CD4-positive, alpha-beta T cell (primary cell): ENCODE measurements at regions of chr19 and their contacts with region 1.

Region 1: DNA sequence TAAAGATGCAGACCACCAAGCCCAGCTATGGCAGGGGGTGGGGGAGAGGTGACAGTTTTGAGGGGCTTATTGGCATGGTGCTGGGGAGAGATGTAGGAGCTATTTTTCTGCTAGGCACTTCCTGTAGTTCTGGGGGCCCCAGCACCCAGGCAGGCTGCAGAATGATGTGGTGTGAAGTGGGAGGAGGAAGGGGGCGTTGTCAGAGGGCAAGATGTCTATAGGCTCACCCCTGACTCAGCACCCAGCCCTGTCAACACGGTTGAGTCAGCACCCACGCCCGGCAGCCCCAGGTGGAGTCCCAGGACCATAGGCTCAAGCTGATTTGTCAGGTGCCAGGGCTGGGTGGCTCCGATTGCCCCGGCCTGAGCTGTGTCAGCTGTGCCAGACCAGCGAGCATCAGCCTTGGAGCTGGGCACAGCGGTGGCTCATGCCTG is 5.8 kb downstream of the KLF2 start:
- DNase-seq: peak; percentile 87 to 98 (median 94)
- ATAC-seq: peak; percentile 66
- H3K4me3 ChIP-seq: peak overlapping the region; percentile 98
- H3K4me3 Mint-ChIP-seq: peak overlapping the region; percentile 92
- H3K27ac ChIP-seq: peak overlapping the region; percentile 77 to 94
- H3K27ac Mint-ChIP-seq: peak overlapping the region; percentile 97
- H3K4me1 ChIP-seq: peaks cover 49% of the 10 kb centered on the region
- H3K4me1 Mint-ChIP-seq: peaks cover 59% of the 10 kb centered on the region
- H3K27me3 ChIP-seq: no peaks in the 10 kb centered on the region
- H3K27me3 Mint-ChIP-seq: peaks cover 24% of the 10 kb centered on the region
- CTCF ChIP-seq: no peak

Region 2: DNA sequence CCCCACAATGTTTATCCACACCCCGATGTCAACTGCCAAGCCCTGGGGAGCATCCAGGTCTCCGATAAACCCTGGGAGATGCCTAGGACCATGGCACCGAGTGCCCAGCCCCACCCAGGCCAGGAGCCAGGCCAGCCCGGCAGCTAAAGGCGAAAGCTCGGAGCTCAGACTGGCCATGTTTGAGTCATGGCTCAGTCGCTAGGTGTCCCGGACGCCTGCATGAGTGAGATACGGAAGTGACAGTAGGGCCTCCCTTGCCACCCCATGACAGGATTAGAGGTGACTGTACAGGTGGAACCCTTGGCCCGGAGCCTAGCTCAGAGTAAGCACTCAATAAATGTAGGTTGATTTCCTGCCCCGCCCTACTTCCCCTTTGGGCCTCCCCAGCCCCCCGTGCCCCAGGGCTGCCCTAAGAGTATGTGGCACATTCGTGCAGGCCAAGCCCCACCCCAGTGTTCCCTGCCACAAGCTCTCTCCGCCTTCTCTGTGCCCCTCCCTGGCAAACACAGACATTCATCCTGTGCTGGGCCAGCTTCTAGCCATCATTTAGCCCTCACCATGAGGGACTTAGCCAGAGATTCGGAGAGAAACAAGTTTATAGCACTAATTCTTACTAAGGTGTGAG is 259.9 kb before region 1 on chr19:
- CTCF ChIA-PET with region 1: interaction called, 4 read pairs
- POLR2A ChIA-PET with region 1: interaction called, 10 read pairs
- intact Hi-C with region 1: no loop called
- DNase-seq: peak; percentile 69 to 98 (median 86)
- ATAC-seq: peak; percentile 88
- H3K4me3 ChIP-seq: peak overlapping the region; percentile 31
- H3K4me3 Mint-ChIP-seq: peak overlapping the region; percentile 76
- H3K27ac ChIP-seq: peak overlapping the region; percentile 84 to 92
- H3K27ac Mint-ChIP-seq: no peak overlapping the region
- H3K4me1 ChIP-seq: peaks cover 77% of the 10 kb centered on the region
- H3K4me1 Mint-ChIP-seq: peaks cover 40% of the 10 kb centered on the region
- H3K27me3 ChIP-seq: no peaks in the 10 kb centered on the region
- H3K27me3 Mint-ChIP-seq: no peaks in the 10 kb centered on the region
- CTCF ChIP-seq: peak; percentile 37

Region 3: DNA sequence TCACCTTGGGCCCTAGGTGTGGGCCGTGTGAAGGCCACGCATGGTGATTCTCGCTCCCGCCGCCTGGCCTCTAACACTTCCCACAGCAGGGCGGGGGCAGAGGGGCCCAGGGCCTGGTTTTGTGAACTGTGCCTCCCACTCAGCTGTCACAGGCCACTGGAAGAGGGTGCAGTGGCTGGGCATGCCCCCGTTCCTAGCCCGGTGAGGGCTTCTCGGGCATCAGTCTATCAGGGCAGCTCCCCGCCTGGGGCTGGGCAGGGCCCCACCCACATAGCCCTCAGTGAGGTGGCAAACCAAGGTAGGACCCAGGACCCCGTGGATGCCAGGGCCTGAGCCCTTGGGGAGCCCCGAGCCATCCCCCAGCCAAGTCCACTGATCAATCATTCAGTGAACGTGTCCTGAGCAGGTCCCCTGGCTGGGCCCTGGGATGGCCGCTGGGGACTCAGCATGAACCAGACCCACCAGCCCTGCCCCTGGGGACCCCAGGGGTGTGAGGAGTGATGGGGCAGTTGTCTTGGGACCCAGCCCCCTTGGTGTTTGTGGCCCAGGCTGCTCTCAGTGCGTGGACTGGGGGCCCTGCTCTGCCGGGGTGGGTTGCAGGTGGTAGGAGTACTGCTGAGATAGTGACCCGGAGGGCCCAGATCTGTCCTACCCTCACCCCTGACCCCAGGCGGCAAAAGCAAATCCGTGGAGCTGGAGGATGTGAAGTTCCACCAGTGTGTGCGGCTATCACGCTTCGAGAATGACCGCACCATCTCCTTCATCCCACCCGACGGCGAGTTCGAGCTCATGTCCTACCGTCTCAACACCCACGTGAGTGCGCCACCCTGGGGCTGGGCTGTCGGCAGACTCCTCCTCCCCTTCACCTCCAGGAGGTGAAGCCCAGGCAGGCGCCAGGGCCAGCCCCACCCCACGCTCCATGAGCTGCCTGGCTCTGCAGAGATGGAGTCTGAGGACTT is 103.2 kb before region 1 on chr19:
- CTCF ChIA-PET with region 1: no interaction called
- POLR2A ChIA-PET with region 1: no interaction called
- intact Hi-C with region 1: no loop called
- DNase-seq: peak in 2 of 14 experiments; percentile 21 to 25
- ATAC-seq: no peak
- H3K4me3 ChIP-seq: no peak overlapping the region
- H3K4me3 Mint-ChIP-seq: no peak overlapping the region
- H3K27ac ChIP-seq: peak overlapping the region in 1 of 2 donors; percentile 18
- H3K27ac Mint-ChIP-seq: no peak overlapping the region
- H3K4me1 ChIP-seq: peaks cover 3% of the 10 kb centered on the region
- H3K4me1 Mint-ChIP-seq: no peaks in the 10 kb centered on the region
- H3K27me3 ChIP-seq: no peaks in the 10 kb centered on the region
- H3K27me3 Mint-ChIP-seq: no peaks in the 10 kb centered on the region
- CTCF ChIP-seq: no peak

Region 4: GRCh38 chr19:16266586-16266942 is 63.8 kb before region 1 on chr19:
- CTCF ChIA-PET with region 1: interaction called, 3 read pairs
- POLR2A ChIA-PET with region 1: interaction called, 10 read pairs
- intact Hi-C with region 1: no loop called
- DNase-seq: peak; percentile 40 to 85 (median 60)
- ATAC-seq: peak; percentile 60
- H3K4me3 ChIP-seq: peak overlapping the region; percentile 20
- H3K4me3 Mint-ChIP-seq: peak overlapping the region; percentile 59
- H3K27ac ChIP-seq: peak overlapping the region in 1 of 2 donors; percentile 22
- H3K27ac Mint-ChIP-seq: peak overlapping the region; percentile 87
- H3K4me1 ChIP-seq: peaks cover 70% of the 10 kb centered on the region
- H3K4me1 Mint-ChIP-seq: peaks cover 48% of the 10 kb centered on the region
- H3K27me3 ChIP-seq: no peaks in the 10 kb centered on the region
- H3K27me3 Mint-ChIP-seq: no peaks in the 10 kb centered on the region
- CTCF ChIP-seq: no peak

Region 5: DNA sequence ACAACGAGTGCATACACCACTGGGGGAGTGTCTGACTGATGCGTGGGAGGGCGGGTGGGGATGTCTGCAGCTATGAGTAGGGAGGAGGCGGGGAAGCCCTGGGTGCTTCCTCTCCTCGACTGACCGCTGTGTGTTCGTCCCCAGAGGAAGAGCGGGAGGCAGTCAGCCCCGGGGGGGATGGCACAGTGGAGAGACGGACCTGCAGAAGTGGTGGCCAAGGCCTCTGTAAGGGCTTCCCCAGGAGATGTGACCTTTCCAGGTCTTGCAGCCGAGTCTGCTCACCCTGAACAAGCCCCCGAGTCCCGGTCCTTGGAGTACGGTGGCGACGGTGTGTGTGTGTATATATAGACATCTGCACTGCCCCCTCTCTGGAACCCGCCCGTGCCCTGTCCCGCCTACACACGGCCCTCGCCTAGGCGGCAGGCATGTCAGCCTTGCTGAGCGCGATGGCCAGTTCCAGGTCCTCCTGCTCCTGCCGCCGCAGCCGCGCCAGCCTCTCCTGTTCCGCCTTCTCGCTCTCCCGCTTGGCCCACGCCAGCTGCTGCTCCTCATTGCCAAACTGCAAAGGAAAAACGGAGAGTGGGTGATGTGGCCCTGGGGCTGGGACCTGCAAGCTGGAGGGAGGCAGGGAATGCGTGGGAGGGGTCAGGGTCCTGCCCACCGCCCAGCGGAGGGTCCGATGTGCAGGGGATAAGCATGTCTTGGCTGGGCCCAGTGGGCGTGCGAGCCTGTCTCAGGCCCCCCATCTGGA is 25.1 kb after region 1 on chr19:
- CTCF ChIA-PET with region 1: interaction called, 7 read pairs
- POLR2A ChIA-PET with region 1: interaction called, 3,819 read pairs
- intact Hi-C with region 1: no loop called
- DNase-seq: peak in 4 of 14 experiments; percentile 19 to 60 (median 54)
- ATAC-seq: peak; percentile 74
- H3K4me3 ChIP-seq: no peak overlapping the region
- H3K4me3 Mint-ChIP-seq: peak overlapping the region; percentile 63
- H3K27ac ChIP-seq: no peak overlapping the region
- H3K27ac Mint-ChIP-seq: peak overlapping the region; percentile 68
- H3K4me1 ChIP-seq: peaks cover 83% of the 10 kb centered on the region
- H3K4me1 Mint-ChIP-seq: peaks cover 79% of the 10 kb centered on the region
- H3K27me3 ChIP-seq: no peaks in the 10 kb centered on the region
- H3K27me3 Mint-ChIP-seq: no peaks in the 10 kb centered on the region
- CTCF ChIP-seq: no peak

Region 6: DNA sequence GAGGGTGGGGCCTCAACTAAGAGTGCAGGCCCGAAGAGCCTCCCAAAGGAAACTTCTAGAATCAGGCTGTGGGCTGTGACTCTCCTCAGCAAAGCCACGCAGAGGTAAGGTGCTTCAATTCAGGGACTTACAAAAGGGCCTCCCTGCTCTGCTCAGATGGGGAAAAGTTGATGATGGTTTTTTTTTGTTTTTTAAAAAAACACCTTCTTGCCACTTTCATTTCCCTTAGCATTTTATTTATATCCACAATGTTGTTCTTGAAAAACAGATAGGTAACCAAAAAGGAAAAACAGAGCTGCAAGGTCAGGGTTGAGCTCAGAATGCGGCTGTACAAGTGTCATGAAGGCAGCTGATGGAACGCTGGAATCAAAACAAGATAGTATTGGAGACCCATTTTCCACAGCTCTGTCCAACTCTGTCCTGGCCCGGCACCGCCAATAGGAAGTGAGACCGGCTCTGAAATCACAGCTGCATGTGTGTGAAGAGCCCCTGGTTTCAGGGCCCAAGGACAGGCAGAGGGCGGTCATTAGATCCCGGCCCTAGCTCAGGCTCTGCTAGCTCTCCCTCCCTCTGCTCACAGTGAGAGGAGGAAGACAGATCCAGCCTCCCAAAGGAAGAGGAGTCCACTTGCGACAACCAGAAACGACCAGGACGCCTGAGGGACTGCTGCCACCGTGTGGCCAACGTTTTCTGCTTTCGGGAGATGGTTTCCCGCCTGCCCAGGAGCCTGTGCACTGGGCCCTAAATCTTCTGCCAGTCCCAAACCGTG is 52.6 kb after region 1 on chr19:
- CTCF ChIA-PET with region 1: interaction called, 45 read pairs
- POLR2A ChIA-PET with region 1: interaction called, 3,819 read pairs
- intact Hi-C with region 1: loop called (anchors 1 kb)
- DNase-seq: peak; percentile 69 to 90 (median 82)
- ATAC-seq: peak; percentile 81
- H3K4me3 ChIP-seq: peak overlapping the region; percentile 19
- H3K4me3 Mint-ChIP-seq: peak overlapping the region; percentile 76
- H3K27ac ChIP-seq: peak overlapping the region; percentile 16 to 67
- H3K27ac Mint-ChIP-seq: no peak overlapping the region
- H3K4me1 ChIP-seq: peaks cover 82% of the 10 kb centered on the region
- H3K4me1 Mint-ChIP-seq: peaks cover 62% of the 10 kb centered on the region
- H3K27me3 ChIP-seq: no peaks in the 10 kb centered on the region
- H3K27me3 Mint-ChIP-seq: no peaks in the 10 kb centered on the region
- CTCF ChIP-seq: peak; percentile 92

Region 7: DNA sequence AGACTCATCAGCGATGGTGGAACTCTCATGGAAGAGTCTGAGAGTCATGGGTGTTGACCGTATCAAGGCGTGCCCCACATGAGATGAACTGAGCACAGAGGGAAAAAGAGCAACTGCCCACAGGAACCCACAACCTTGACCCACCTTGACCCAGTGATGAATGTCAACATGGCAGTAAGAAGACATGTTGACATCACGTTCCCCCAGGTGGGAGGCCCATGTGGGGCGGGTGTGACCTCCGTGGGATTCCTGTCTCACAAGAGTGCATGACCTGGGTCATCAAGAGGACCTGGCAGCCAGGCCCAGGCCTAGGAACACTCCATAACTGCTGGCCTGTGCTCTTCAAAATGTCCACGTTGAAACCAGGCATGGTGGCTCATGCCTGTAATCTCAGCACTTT is 95.6 kb after region 1 on chr19:
- CTCF ChIA-PET with region 1: no interaction called
- POLR2A ChIA-PET with region 1: no interaction called
- intact Hi-C with region 1: no loop called
- DNase-seq: no peak
- ATAC-seq: no peak
- H3K4me3 ChIP-seq: no peak overlapping the region
- H3K4me3 Mint-ChIP-seq: no peak overlapping the region
- H3K27ac ChIP-seq: no peak overlapping the region
- H3K27ac Mint-ChIP-seq: no peak overlapping the region
- H3K4me1 ChIP-seq: peaks cover 11% of the 10 kb centered on the region
- H3K4me1 Mint-ChIP-seq: no peaks in the 10 kb centered on the region
- H3K27me3 ChIP-seq: no peaks in the 10 kb centered on the region
- H3K27me3 Mint-ChIP-seq: no peaks in the 10 kb centered on the region
- CTCF ChIP-seq: no peak